Heart left ventricle (tissue), 16 donors: ENCODE measurements at regions of chr12 and their contacts with region 1.

Region 1: DNA sequence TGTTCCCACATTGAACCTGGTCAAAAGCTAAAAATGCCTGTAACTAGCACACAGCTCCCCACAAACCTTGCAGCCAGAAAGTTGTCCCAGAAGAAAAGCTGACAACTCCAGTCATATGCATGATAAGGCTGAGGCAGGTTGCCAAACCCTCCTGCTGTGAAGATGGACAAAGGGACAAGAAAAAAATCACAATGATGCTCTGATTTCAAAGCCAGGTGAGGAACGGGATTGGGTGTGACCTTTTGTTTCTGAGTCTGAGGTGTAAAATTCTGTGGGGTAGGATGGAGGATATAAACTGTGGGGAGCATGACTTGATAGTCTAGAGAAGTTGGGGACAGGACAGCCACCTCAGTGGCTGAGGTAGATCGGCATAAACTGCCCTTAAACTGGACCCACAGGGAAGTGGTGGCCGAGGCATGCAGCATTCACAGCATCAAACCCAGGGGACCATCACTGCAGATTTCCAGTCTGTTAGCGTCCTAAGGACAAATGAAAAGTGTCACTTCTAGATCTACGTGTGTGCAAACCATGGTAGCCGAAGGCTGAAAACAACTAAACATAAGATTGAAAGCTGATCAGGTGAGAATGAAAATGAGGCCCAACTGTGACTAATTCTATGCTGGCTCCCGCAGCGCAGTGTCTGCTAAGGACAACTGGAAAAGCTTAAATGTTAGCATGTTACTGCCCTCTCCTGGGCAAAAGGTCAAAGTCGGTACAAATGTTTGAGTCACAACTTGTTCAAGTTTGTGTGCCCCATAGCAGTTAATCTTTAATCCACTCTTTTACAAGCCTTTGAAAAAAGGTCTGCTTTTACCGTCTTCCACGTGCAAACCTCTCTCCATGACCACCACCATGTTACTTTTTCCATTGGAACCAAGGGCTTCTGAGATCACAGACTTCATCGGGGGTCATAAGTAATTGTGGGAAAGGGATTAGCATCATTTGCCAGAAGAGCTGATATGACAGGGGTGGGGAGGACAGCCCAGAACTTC is 39.8 kb downstream of the GRIN2B start:
- DNase-seq: peak in 3 of 5 donors; percentile 15 to 31 (median 31)
- ATAC-seq: peak in 3 of 4 donors; percentile 72 to 81 (median 76)
- H3K4me3 ChIP-seq: no peak overlapping the region
- H3K27ac ChIP-seq: no peak overlapping the region
- H3K4me1 ChIP-seq: no peaks in the 10 kb centered on the region
- H3K27me3 ChIP-seq: peaks cover 0 to 5% (median 0%) of the 10 kb centered on the region in 9 donors
- CTCF ChIP-seq: peak in 11 of 12 donors; percentile 6 to 51 (median 36)
- POLR2A ChIP-seq: no peak

Region 2: DNA sequence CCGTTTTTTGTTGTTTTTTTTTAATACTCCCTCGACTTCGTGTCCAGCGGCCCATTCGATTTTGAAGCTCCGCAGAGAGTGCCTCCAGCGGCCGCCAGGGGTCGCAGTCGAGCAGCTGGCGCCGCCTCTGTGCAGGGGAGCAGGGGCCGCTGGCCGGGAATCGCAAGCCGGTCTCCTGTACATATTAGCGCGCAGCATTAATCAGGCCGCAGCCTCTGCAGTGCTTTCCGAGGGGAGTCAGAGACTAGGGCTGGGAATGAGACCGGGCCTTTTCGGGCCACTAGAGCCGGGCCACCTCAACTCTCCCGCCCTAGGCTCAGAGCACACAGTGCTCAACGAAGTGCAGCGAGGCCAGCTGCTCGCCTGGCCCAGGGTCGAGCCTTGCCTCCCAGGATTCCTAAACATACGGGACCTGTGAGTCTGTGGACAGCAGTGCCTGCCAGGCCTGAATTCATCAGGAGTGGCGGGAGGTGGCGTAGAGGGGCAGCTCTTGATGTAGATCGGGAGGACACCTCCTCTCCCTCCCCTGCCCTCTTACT is 663.2 kb before region 1 on chr12:
- intact Hi-C with region 1: loop called in 2 of 10 experiments (anchors 5 to 10 kb)
- DNase-seq: peak; percentile 57 to 87 (median 71)
- ATAC-seq: peak; percentile 91 to 98 (median 93)
- H3K4me3 ChIP-seq: peak overlapping the region in 2 of 12 donors; percentile 6 to 22
- H3K27ac ChIP-seq: no peak overlapping the region
- H3K4me1 ChIP-seq: peaks cover 0 to 10% (median 5%) of the 10 kb centered on the region in 12 donors
- H3K27me3 ChIP-seq: peaks cover 0 to 33% (median 0%) of the 10 kb centered on the region in 9 donors
- CTCF ChIP-seq: peak; percentile 97 to 99 (median 98)
- POLR2A ChIP-seq: no peak

Region 3: GRCh38 chr12:13734584-13735152 is 206.9 kb before region 1 on chr12:
- intact Hi-C with region 1: loop called in 6 of 10 experiments (anchors 1 to 5 kb)
- DNase-seq: no peak
- ATAC-seq: no peak
- H3K4me3 ChIP-seq: no peak overlapping the region
- H3K27ac ChIP-seq: no peak overlapping the region
- H3K4me1 ChIP-seq: no peaks in the 10 kb centered on the region
- H3K27me3 ChIP-seq: peaks cover 0 to 11% (median 0%) of the 10 kb centered on the region in 9 donors
- CTCF ChIP-seq: no peak
- POLR2A ChIP-seq: no peak

Region 4: DNA sequence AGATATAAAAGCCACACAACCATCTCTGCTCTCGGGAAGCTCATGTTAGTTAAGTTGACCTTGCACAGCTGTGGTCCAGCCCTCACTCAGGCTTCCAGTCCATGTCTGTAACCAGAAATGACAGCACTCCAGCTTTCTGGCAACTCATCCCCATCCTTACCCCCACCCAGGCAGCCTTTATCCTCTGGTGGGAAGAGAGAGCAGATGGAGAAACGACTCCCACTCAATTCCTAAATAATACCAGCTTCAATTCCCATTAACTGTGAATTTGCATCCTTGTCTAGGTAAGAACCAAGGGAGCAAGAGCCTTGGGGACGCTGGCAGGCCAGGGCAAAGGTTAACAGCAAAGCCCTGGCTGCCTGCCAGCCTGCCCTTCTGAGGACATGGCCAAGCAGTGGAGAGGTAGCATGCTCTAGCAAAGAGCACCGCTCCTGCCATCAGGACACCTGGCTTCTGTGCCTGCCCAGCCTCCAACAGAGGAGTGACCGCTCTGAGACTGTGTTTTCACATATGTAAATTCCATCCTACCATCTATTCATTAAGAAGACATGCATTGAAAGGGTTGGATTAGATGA is 196.4 kb before region 1 on chr12:
- intact Hi-C with region 1: loop called in 3 of 10 experiments (anchors 5 kb)
- DNase-seq: peak in 1 of 5 donors; percentile 24
- ATAC-seq: no peak
- H3K4me3 ChIP-seq: no peak overlapping the region
- H3K27ac ChIP-seq: no peak overlapping the region
- H3K4me1 ChIP-seq: no peaks in the 10 kb centered on the region
- H3K27me3 ChIP-seq: peaks cover 0 to 25% (median 6%) of the 10 kb centered on the region in 9 donors
- CTCF ChIP-seq: no peak
- POLR2A ChIP-seq: no peak

Region 5: GRCh38 chr12:13864081-13864673 is 77.4 kb before region 1 on chr12:
- intact Hi-C with region 1: loop called in 1 of 10 experiments (anchors 5 kb)
- DNase-seq: peak; percentile 58 to 75 (median 69)
- ATAC-seq: peak in 3 of 4 donors; percentile 60 to 85 (median 68)
- H3K4me3 ChIP-seq: no peak overlapping the region
- H3K27ac ChIP-seq: no peak overlapping the region
- H3K4me1 ChIP-seq: no peaks in the 10 kb centered on the region
- H3K27me3 ChIP-seq: peaks cover 0 to 33% (median 0%) of the 10 kb centered on the region in 9 donors
- CTCF ChIP-seq: peak; percentile 78 to 94 (median 87)
- POLR2A ChIP-seq: no peak

Region 6: GRCh38 chr12:14167005-14167628 is 225.6 kb after region 1 on chr12:
- intact Hi-C with region 1: no loop called
- DNase-seq: peak in 3 of 5 donors; percentile 21 to 25 (median 23)
- ATAC-seq: peak in 1 of 4 donors; percentile 49
- H3K4me3 ChIP-seq: no peak overlapping the region
- H3K27ac ChIP-seq: no peak overlapping the region
- H3K4me1 ChIP-seq: no peaks in the 10 kb centered on the region
- H3K27me3 ChIP-seq: peaks cover 0 to 4% (median 0%) of the 10 kb centered on the region in 9 donors
- CTCF ChIP-seq: peak; percentile 89 to 98 (median 94)
- POLR2A ChIP-seq: no peak